Prostate gland (tissue), 2 donors: ENCODE measurements at regions of chr3 and their contacts with region 1.

Region 1: GRCh38 chr3:196502775-196503195 is 783 bp downstream of the RNF168 start:
- DNase-seq: peak; percentile 31
- H3K4me3 ChIP-seq: peak overlapping the region; percentile 62 to 65
- H3K27ac ChIP-seq: peak overlapping the region; percentile 88 to 93
- H3K4me1 ChIP-seq: no peaks in the 10 kb centered on the region
- H3K27me3 ChIP-seq: no peaks in the 10 kb centered on the region
- CTCF ChIP-seq: no peak
- POLR2A ChIP-seq: no peak

Region 2: DNA sequence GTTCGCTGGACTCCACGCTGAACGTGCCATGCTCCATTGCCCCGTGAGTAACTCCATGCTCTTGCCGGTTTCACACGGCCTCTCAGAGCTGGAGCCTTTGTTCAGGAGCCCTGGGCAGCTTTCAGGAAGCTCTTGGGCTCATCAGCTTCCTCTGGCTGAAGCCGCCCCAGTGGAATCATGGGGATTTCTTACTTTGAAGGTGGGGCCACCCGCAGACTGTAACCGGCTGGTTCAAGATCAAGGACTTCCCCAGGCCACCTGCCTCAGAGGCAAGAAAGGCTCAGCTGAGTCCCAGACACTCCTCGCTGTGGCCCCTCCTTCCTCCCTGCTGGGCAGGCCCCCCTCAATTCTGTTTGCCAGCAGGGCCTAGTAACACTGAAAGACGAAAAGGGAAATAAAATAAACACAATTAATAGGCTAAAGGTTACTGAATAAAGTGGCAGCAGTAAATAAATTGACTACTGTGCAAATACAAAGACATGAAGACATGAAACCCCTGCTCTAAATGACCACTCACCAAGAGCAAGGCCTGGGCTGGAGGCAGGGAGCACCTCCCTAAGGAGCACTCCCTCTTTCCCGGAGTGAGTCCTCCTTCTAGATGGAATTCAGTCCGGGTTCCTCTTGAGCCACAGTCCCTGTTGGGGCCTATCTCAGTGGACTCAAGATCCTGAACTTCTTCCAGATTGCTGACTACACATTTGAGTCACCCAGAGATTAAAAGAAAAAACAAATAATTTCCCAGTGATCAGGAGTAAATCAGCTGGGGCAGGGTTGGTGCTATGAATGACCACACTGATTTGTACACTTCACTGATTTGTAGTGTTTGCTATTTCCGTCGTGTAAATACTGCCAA is 342.6 kb before region 1 on chr3:
- intact Hi-C with region 1: no loop called
- DNase-seq: no peak
- H3K4me3 ChIP-seq: no peak overlapping the region
- H3K27ac ChIP-seq: no peak overlapping the region
- H3K4me1 ChIP-seq: no peaks in the 10 kb centered on the region
- H3K27me3 ChIP-seq: no peaks in the 10 kb centered on the region
- CTCF ChIP-seq: no peak
- POLR2A ChIP-seq: no peak

Region 3: GRCh38 chr3:196432137-196432879 is 70.5 kb before region 1 on chr3 and contains the start of gene UBXN7:
- intact Hi-C with region 1: loop called (anchors 2 kb)
- DNase-seq: peak; percentile 93
- H3K4me3 ChIP-seq: peak within 1 kb of the TSS; percentile 96 to 100
- H3K27ac ChIP-seq: peak within 1 kb of the TSS; percentile 95 to 98
- H3K4me1 ChIP-seq: no peaks in the 10 kb centered on the region
- H3K27me3 ChIP-seq: no peaks in the 10 kb centered on the region
- CTCF ChIP-seq: peak in 1 of 4 experiments; percentile 12
- POLR2A ChIP-seq: peak; percentile 91
- total RNA-seq, gene UBXN7: 19.1 to 36.9 TPM